ENCODE measurements at regions of chr20 and their contacts with region 1.

Region 1: DNA sequence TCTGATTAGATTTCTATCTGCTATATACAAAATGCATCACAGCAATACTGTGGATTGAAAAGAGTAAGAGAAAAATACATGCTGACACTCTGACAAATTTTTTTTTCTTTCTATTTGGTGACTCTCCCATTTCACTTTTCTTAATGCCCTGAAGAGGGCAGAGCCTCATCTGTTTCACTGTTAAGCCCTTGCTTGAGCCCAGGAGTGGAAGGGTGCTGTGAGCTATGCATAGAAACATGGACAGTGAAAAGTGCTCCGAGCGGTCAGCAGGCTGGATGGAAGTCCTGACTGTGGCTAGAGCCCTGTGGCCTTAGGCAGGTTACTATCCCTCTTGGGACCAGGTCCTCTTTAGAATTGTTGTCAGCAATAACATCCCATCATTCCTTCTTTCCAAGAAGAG is 17.4 kb upstream of the CSE1L start:
- DNase-seq: peak; percentile 58
- ATAC-seq: peak; percentile 84
- H3K4me3 ChIP-seq: no peak overlapping the region
- H3K27ac ChIP-seq: no peak overlapping the region
- H3K4me1 ChIP-seq: no peaks in the 10 kb centered on the region
- H3K27me3 ChIP-seq: no peaks in the 10 kb centered on the region
- CTCF ChIP-seq: peak; percentile 58
- EP300 ChIP-seq: no peak
- POLR2A ChIP-seq: no peak
- RAD21 ChIP-seq: peak; percentile 29; the same call in 1 of the 2 replicates

Region 2: DNA sequence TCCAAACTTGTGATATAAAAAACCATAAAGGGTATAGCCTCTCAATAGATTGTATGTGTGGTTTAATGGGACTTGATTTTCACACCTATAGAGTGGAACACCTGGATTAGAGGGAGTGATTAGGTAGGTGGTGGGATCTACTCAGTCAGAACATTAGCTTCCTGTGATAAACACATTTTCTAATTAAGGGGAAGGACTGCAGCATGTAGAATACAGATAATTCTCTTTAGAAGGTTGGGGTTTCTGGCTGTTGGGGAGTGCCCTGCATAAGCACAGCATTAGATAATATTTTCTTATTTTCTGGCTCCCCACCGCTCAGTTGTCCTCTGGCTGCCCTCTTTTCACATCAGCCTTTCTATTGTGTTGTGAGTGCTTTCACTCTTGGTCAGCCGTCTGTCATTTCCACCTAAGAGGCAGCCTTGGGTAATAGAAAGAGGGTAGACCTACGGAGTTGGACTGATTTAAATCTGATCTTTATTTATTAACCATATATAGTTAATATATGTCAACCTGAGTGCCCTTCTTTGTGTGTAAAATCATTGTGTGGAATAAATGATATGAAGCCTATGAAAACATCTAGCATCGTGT is 25.5 kb after region 1 on chr20:
- CTCF ChIA-PET with region 1: no interaction called
- POLR2A ChIA-PET with region 1: interaction called, 4 read pairs
- in situ Hi-C with region 1: no loop called
- intact Hi-C with region 1: loop called (anchors 2 kb)
- DNase-seq: no peak
- ATAC-seq: no peak
- H3K4me3 ChIP-seq: no peak overlapping the region
- H3K27ac ChIP-seq: peak overlapping the region; percentile 13
- H3K4me1 ChIP-seq: peaks cover 70% of the 10 kb centered on the region
- H3K27me3 ChIP-seq: no peaks in the 10 kb centered on the region
- CTCF ChIP-seq: no peak
- EP300 ChIP-seq: no peak
- POLR2A ChIP-seq: no peak
- RAD21 ChIP-seq: no peak

Measured in HepG2 (cell line).